GM12878 (cell line): ENCODE measurements at regions of chr17 and their contacts with region 1.

Region 1: DNA sequence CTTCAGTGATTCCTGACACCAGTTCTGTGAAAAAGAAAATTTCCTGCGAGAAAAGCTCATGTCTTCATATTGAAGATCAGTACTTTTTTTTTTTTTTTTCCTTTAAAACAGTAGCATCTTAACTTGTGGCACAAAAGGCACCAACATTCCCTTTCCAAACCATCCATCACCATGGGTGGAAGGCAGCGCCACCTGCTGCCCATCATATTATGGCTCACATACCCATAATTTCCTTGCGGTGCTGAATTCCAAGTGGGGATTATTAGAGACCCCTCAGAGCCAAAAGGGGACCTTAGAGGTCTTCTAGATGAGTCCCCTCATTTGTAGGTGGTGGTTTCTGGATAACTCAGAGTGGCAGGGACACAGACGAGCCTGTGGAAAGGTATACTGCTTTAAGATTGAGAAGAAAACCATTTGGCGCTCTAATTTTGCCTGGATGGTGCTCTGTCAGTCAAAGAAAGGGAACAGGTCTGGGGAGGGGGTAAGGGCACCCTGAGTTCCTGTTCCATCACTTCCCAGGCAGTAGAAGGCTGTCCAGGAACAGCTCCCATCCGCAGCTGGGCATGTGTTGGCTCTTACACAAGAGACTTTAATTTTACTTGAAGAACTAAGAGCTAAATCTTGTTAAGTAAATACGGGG is 7.9 kb upstream of the SOST start:
- DNase-seq: no peak
- ATAC-seq: no peak
- H3K4me3 ChIP-seq: no peak overlapping the region
- H3K27ac ChIP-seq: no peak overlapping the region
- H3K4me1 ChIP-seq: peaks cover 7% of the 10 kb centered on the region
- H3K27me3 ChIP-seq: no peaks in the 10 kb centered on the region; a peak in 1 of 4 replicates
- CTCF ChIP-seq: peak; percentile 70 to 79 (median 78)
- EP300 ChIP-seq: no peak
- POLR2A ChIP-seq: no peak
- RAD21 ChIP-seq: peak; percentile 19; the same call in 1 of the 2 replicates

Region 2: GRCh38 chr17:43428524-43428923 is 338.0 kb before region 1 on chr17:
- CTCF ChIA-PET with region 1: no interaction called
- POLR2A ChIA-PET with region 1: interaction called, 10 read pairs
- RAD21 ChIA-PET with region 1: no interaction called
- SMC1A ChIA-PET with region 1: no interaction called
- in situ Hi-C with region 1: no loop called
- intact Hi-C with region 1: no loop called
- DNase-seq: no peak
- ATAC-seq: no peak
- H3K4me3 ChIP-seq: no peak overlapping the region
- H3K27ac ChIP-seq: no peak overlapping the region
- H3K4me1 ChIP-seq: no peaks in the 10 kb centered on the region
- H3K27me3 ChIP-seq: no peaks in the 10 kb centered on the region; a peak in 1 of 4 replicates
- CTCF ChIP-seq: no peak; a peak in 1 of 6 replicates
- EP300 ChIP-seq: no peak
- POLR2A ChIP-seq: no peak
- RAD21 ChIP-seq: no peak